ENCODE measurements at regions of chr2 and their contacts with region 1.

Region 1: DNA sequence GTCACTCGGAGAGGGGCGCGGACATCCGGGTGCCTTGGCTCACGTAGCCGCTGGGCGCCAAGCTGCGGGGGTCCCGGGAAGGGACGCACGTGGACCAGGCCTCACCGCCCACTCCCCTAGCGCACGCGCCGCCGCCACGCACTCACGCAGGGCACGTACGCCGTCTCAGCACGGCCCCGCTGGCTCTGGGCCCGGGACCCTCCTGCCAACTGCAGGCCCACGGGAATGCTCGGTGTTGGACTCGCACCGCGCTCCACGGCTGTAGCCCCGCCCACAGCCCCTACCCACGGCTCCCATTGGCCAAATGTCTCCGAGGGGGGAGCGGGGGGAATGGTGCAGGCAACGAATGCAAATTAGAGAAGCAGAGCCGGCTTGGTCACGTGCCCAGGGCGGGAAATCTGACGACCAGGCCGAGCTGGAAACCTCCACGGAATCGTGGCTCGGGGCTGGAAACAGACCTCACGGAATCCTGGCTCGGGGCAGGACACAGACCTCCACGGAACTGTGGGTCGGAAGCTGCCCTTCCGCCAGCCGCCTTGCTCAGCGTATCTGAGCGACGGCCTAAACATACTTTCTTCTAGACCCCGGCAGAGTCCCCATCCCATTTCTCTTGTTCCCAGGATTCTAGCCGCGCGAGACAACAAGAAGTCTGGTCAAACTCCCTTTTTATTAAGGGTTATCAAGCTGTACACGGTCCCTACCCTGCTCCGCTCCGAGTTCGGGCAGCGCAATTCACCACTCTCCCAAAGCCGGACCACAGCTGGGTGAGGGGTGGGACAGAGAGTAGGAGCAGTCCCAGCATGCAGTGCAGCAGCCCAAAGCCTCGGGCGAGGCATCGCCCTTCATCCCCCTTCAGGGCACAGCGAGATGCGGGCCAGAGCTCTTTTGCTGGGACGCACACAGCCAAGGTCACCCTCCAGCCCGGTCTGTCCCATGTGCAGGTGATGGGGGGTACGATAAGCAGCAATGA is at the start of gene ABCB6:
- DNase-seq: peak; percentile 84
- H3K4me3 ChIP-seq: peak within 1 kb of the TSS; percentile 69
- H3K27ac ChIP-seq: peak within 1 kb of the TSS; percentile 96
- H3K27me3 ChIP-seq: no peaks in the 10 kb centered on the region
- CTCF ChIP-seq: no peak
- polyA plus RNA-seq, gene ABCB6: 20.9 and 22.2 TPM in 2 replicates

Region 2: GRCh38 chr2:219206442-219207253 is 12.4 kb before region 1 on chr2 and contains the start of gene ZFAND2B:
- CTCF ChIA-PET with region 1: no interaction called
- POLR2A ChIA-PET with region 1: interaction called, 37 read pairs
- DNase-seq: peak; percentile 69
- H3K4me3 ChIP-seq: peak within 1 kb of the TSS; percentile 83
- H3K27ac ChIP-seq: peak within 1 kb of the TSS; percentile 78
- H3K27me3 ChIP-seq: no peaks in the 10 kb centered on the region
- CTCF ChIP-seq: no peak; the same call in 1 of the 2 replicates
- polyA plus RNA-seq, gene ZFAND2B: 24.5 and 29.6 TPM in 2 replicates

Region 3: GRCh38 chr2:219229305-219230058 is 10.5 kb after region 1 on chr2 and contains the starts of genes ANKZF1 and ATG9A:
- CTCF ChIA-PET with region 1: no interaction called
- POLR2A ChIA-PET with region 1: interaction called, 12 read pairs
- DNase-seq: peak; percentile 93
- H3K4me3 ChIP-seq: peak within 1 kb of the TSS; percentile 71
- H3K27ac ChIP-seq: peak within 1 kb of the TSS; percentile 82
- H3K27me3 ChIP-seq: no peaks in the 10 kb centered on the region
- CTCF ChIP-seq: no peak
- polyA plus RNA-seq, gene ANKZF1: 20.3 and 22.0 TPM in 2 replicates
- polyA plus RNA-seq, gene ATG9A: 81.0 and 84.3 TPM in 2 replicates